B cell (primary cell): ENCODE measurements at regions of chr3 and their contacts with region 1.

Region 1: DNA sequence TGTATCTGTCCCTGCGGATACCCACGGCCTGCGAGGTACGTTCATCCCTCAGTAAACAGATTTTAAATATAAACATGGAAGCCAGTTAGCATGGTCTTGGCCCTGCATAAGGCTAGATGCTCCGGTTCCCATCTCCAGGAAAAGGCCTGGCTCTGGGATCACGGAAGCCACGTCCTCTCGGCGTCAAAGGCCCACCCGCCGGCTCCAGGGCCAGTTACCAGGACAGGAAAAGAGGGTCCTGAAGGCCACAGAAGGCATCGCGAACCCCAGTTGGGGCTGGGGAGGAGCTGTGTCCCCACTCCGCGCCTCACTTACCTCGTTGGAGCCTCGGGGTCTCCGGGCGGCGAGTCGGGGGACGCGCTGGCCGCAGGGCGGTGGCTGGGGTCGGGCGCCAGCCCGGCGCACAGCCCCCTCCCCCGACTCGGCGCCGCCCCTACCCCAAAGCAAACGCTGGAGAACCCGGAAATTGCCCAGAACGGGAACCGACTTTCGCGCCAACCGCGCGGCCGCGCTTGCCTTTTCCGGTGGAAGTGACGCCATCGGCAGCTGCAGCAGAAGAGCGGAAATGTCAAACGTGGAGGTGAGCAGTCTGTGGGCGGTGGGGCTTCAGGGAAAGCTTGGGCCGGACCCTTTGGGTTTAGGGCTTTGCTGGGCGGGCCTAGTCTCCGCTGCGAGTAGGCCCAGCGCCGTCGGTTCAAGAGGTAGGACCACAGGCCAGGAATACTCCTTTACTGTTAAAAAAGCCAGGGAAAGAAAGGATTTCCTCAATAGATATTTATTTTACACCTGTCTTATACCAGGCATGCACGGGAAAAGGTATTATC is at the start of gene TOPBP1:
- DNase-seq: peak; percentile 88
- ATAC-seq: peak; percentile 84
- H3K4me3 ChIP-seq: peak within 1 kb of the TSS; percentile 74 to 95 (median 91)
- H3K4me3 Mint-ChIP-seq: peak within 1 kb of the TSS; percentile 98
- H3K27ac ChIP-seq: peak within 1 kb of the TSS; percentile 67 to 87
- H3K27ac Mint-ChIP-seq: peak within 1 kb of the TSS; percentile 95
- H3K4me1 ChIP-seq: peaks cover 19 to 26% of the 10 kb centered on the region in 2 donors
- H3K4me1 Mint-ChIP-seq: peaks cover 41% of the 10 kb centered on the region
- H3K27me3 ChIP-seq: no peaks in the 10 kb centered on the region
- H3K27me3 Mint-ChIP-seq: no peaks in the 10 kb centered on the region
- CTCF ChIP-seq: no peak
- total RNA-seq, gene TOPBP1: 47.7 and 53.7 TPM in 2 replicates

Region 2: GRCh38 chr3:133620066-133620784 is 41.4 kb before region 1 on chr3:
- CTCF ChIA-PET with region 1: no interaction called
- POLR2A ChIA-PET with region 1: no interaction called
- intact Hi-C with region 1: loop called (anchors 2 kb)
- DNase-seq: peak; percentile 77
- ATAC-seq: peak; percentile 97
- H3K4me3 ChIP-seq: no peak overlapping the region
- H3K4me3 Mint-ChIP-seq: peak overlapping the region; percentile 52
- H3K27ac ChIP-seq: peak overlapping the region; percentile 33 to 59
- H3K27ac Mint-ChIP-seq: peak overlapping the region; percentile 83
- H3K4me1 ChIP-seq: peaks cover 0 to 12% of the 10 kb centered on the region in 2 donors
- H3K4me1 Mint-ChIP-seq: peaks cover 13% of the 10 kb centered on the region
- H3K27me3 ChIP-seq: no peaks in the 10 kb centered on the region
- H3K27me3 Mint-ChIP-seq: no peaks in the 10 kb centered on the region
- CTCF ChIP-seq: no peak

Region 3: GRCh38 chr3:133805527-133806475 is 144.1 kb after region 1 on chr3 and contains the start of gene SRPRB:
- CTCF ChIA-PET with region 1: no interaction called
- POLR2A ChIA-PET with region 1: no interaction called
- intact Hi-C with region 1: loop called (anchors 1 kb)
- DNase-seq: peak; percentile 95
- ATAC-seq: peak; percentile 98
- H3K4me3 ChIP-seq: peak within 1 kb of the TSS; percentile 56 to 95 (median 87)
- H3K4me3 Mint-ChIP-seq: peak within 1 kb of the TSS; percentile 99
- H3K27ac ChIP-seq: peak within 1 kb of the TSS; percentile 75 to 80
- H3K27ac Mint-ChIP-seq: peak within 1 kb of the TSS; percentile 94
- H3K4me1 ChIP-seq: peaks cover 11 to 13% of the 10 kb centered on the region in 2 donors
- H3K4me1 Mint-ChIP-seq: peaks cover 18% of the 10 kb centered on the region
- H3K27me3 ChIP-seq: no peaks in the 10 kb centered on the region
- H3K27me3 Mint-ChIP-seq: no peaks in the 10 kb centered on the region
- CTCF ChIP-seq: no peak
- total RNA-seq, gene SRPRB: 28.8 and 29.7 TPM in 2 replicates

Region 4: DNA sequence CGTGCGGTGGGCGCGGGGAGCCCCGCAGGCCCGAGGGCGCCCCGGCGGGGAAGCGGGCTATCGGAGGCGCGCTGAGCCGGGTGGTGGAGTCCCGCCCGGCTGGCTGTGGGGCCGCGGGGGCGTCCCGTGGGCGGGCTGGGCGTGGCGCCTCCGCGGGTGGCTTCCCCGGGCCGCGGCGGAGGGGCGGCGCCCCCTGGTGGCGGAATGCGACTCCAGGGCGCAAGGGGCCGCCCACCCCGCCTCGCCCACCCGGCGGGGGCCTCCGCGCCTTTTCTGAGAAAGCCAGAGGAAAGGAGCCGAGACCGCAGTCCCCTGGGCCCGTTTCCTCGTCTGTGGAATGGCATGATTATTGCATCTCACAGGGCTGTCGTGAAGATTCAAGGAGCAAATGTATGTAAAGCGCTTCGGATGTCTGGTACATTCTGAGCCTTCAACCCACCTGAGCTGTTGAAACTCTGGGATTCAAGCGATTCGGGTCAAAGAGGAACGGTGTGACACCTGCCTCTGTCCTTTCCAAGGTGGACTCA is 265.9 kb after region 1 on chr3:
- CTCF ChIA-PET with region 1: no interaction called
- POLR2A ChIA-PET with region 1: no interaction called
- intact Hi-C with region 1: loop called (anchors 2 kb)
- DNase-seq: peak; percentile 87
- ATAC-seq: peak; percentile 98
- H3K4me3 ChIP-seq: peak overlapping the region in 4 of 5 experiments; percentile 40 to 66 (median 56)
- H3K4me3 Mint-ChIP-seq: peak overlapping the region; percentile 79
- H3K27ac ChIP-seq: no peak overlapping the region
- H3K27ac Mint-ChIP-seq: no peak overlapping the region
- H3K4me1 ChIP-seq: peaks cover 12 to 14% of the 10 kb centered on the region in 2 donors
- H3K4me1 Mint-ChIP-seq: peaks cover 13% of the 10 kb centered on the region
- H3K27me3 ChIP-seq: peaks cover 0 to 26% (median 5%) of the 10 kb centered on the region in 4 experiments
- H3K27me3 Mint-ChIP-seq: peaks cover 21% of the 10 kb centered on the region
- CTCF ChIP-seq: peak; percentile 81